ENCODE measurements at regions of chr14 and their contacts with region 1.

Region 1: GRCh38 chr14:104768437-104769323 is 15.7 kb downstream of the SIVA1 start:
- DNase-seq: peak; percentile 67
- H3K4me3 ChIP-seq: no peak overlapping the region
- H3K27ac ChIP-seq: no peak overlapping the region
- H3K4me1 ChIP-seq: peaks cover 4% of the 10 kb centered on the region
- H3K27me3 ChIP-seq: no peaks in the 10 kb centered on the region
- CTCF ChIP-seq: peak; percentile 77 to 88

Region 2: DNA sequence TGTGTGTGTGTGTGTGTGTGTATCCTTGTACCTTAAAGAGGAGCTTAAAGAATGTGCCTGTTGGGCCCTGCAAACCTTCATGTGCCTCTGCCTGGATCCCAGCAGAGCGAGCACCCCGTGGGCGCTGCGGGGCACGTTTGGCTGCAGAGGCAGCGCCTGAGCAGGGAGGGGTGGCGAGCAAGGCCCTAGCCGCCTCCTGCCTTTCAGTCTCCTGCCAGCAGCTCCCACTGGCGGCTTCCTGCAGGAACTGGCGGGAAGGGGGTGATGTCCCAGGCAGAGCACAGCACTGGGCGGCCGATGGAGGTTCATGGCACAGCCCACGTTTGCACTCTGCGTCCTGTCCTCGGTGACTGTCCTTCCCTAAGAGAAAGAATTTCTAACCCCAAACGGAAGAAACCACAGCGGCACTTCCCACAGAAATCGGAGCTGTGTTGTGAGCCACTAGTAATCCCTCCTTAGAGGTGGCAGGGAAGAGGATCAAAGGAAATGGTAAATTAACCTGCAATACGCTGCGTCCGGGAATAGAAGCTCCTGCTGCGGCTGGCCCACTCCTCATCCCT is 52.1 kb after region 1 on chr14:
- CTCF ChIA-PET with region 1: no interaction called
- dilution Hi-C with region 1: no loop called
- in situ Hi-C with region 1: loop called in 1 of 2 experiments (anchors 5 kb)
- intact Hi-C with region 1: loop called (anchors 1 kb)
- DNase-seq: peak; percentile 62
- H3K4me3 ChIP-seq: no peak overlapping the region
- H3K27ac ChIP-seq: no peak overlapping the region
- H3K4me1 ChIP-seq: peaks cover 14% of the 10 kb centered on the region
- H3K27me3 ChIP-seq: no peaks in the 10 kb centered on the region
- CTCF ChIP-seq: peak; percentile 40 to 64

Region 3: DNA sequence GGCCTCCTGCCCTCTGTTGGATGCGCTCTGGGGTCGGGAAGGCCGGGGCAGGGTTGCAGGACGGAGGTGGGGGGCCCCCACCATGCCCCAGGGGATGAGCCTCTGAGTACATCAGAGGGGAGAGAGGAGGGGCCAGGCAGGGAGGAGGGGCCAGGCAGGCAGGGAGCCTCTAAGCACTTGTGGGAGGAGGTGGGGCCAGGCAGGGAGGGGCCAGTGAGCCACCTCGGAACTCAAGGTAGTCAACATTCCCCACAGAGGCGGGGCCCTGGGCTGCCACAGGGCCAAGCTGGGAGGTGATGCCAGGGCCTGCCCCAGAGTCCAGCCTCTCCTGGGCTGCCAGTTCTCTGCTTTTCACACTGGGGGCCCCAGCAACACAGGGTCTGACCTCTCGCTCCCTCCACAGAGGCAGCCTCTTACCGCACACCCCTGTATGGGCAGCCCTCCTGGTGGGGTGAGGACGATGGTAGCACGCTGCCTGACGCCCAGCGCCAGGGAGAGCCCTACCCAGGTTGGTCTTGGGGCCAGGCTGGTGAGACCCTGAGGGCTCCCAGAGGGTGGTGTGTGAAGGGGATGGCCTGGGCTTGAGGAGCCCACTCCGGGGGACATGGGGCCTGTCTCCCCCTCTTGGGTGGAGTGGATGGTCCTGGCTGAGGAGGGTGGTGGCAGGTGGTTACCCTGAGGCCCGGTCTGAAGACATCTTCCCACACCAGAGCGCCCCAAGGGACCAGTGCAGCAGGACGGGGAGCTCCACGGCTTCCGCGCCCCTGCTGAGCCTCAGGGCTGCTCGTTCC is 113.8 kb after region 1 on chr14:
- CTCF ChIA-PET with region 1: no interaction called
- dilution Hi-C with region 1: no loop called
- in situ Hi-C with region 1: no loop called
- intact Hi-C with region 1: loop called (anchors 5 kb)
- DNase-seq: peak; percentile 76
- H3K4me3 ChIP-seq: no peak overlapping the region
- H3K27ac ChIP-seq: no peak overlapping the region
- H3K4me1 ChIP-seq: peaks cover 14% of the 10 kb centered on the region
- H3K27me3 ChIP-seq: no peaks in the 10 kb centered on the region
- CTCF ChIP-seq: no peak

Region 4: GRCh38 chr14:104932676-104933631 is 164.3 kb after region 1 on chr14:
- CTCF ChIA-PET with region 1: no interaction called
- dilution Hi-C with region 1: loop called (anchors 5 kb)
- in situ Hi-C with region 1: no loop called
- intact Hi-C with region 1: no loop called
- DNase-seq: peak; percentile 68
- H3K4me3 ChIP-seq: peak overlapping the region; percentile 23 to 48 (median 40)
- H3K27ac ChIP-seq: no peak overlapping the region
- H3K4me1 ChIP-seq: peaks cover 6% of the 10 kb centered on the region
- H3K27me3 ChIP-seq: no peaks in the 10 kb centered on the region
- CTCF ChIP-seq: peak; percentile 46 to 72

Region 5: GRCh38 chr14:105045710-105046326 is 277.1 kb after region 1 on chr14:
- CTCF ChIA-PET with region 1: no interaction called
- dilution Hi-C with region 1: no loop called
- in situ Hi-C with region 1: no loop called
- intact Hi-C with region 1: loop called (anchors 1 kb)
- DNase-seq: peak; percentile 59
- H3K4me3 ChIP-seq: no peak overlapping the region
- H3K27ac ChIP-seq: no peak overlapping the region
- H3K4me1 ChIP-seq: peaks cover 8% of the 10 kb centered on the region
- H3K27me3 ChIP-seq: no peaks in the 10 kb centered on the region
- CTCF ChIP-seq: peak; percentile 92 to 97

Region 6: DNA sequence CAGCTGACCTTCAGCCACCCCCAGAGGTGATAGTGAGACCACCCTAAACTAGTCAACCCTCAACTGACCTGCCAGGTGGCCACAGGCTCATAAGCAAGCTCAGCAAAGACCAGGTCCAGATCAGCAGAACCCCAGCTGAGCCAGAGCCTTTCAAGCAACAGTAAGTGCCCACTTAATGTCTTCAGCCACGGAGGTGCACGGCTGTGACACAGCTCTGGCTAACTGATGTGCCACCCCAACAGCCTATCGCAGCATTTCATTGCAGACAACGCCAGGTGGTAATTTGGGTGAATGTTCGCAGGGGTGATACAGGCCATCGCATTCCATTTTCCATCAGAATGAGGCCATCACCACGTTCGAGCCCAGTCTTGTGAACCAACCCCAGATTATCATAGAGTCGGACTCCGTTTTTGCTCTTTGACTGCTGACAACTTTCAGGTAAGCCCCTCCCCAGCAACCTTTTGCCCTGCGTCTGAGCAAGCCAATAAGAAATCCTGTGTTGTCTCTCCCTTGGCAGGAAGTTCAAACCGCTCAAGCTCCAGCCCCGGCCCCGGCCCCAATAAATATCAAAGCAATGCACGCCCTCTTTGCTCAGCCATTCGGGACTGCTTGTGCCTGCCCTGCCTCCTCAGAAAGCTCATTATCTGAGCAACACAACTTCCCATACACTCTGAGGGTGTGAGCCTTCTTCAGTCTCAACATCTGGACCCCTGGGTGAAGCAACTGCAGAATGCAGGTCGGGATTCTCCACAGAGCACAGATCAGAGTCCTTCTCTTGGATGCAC is 355.5 kb after region 1 on chr14:
- CTCF ChIA-PET with region 1: no interaction called
- dilution Hi-C with region 1: loop called (anchors 10 kb)
- in situ Hi-C with region 1: no loop called
- intact Hi-C with region 1: no loop called
- DNase-seq: no peak
- H3K4me3 ChIP-seq: no peak overlapping the region
- H3K27ac ChIP-seq: no peak overlapping the region
- H3K4me1 ChIP-seq: peaks cover 12% of the 10 kb centered on the region
- H3K27me3 ChIP-seq: no peaks in the 10 kb centered on the region
- CTCF ChIP-seq: no peak